HepG2 (cell line): ENCODE measurements at regions of chr12 and their contacts with region 1.

Region 1: GRCh38 chr12:212715-213526 is 1.0 kb downstream of the SLC6A12 start:
- DNase-seq: peak; percentile 47
- ATAC-seq: peak; percentile 5
- H3K4me3 ChIP-seq: peak overlapping the region; percentile 35 to 65 (median 43); a peak in 5 of 6 replicates
- H3K27ac ChIP-seq: no peak overlapping the region
- H3K4me1 ChIP-seq: peaks cover 73% of the 10 kb centered on the region
- H3K27me3 ChIP-seq: peaks cover 0 to 16% of the 10 kb centered on the region in 2 experiments; a peak in 3 of 5 replicates
- CTCF ChIP-seq: no peak
- EP300 ChIP-seq: peak in 1 of 2 experiments; percentile 44; a peak in 1 of 4 replicates
- POLR2A ChIP-seq: no peak
- RAD21 ChIP-seq: no peak

Region 2: GRCh38 chr12:176321-177181 is 36.4 kb before region 1 on chr12:
- CTCF ChIA-PET with region 1: no interaction called
- POLR2A ChIA-PET with region 1: no interaction called
- in situ Hi-C with region 1: no loop called
- intact Hi-C with region 1: loop called (anchors 5 kb)
- DNase-seq: peak; percentile 61
- ATAC-seq: peak; percentile 76
- H3K4me3 ChIP-seq: peak overlapping the region in 1 of 3 experiments; percentile 52; a peak in 2 of 6 replicates
- H3K27ac ChIP-seq: no peak overlapping the region
- H3K4me1 ChIP-seq: peaks cover 52% of the 10 kb centered on the region
- H3K27me3 ChIP-seq: peaks cover 10 to 59% of the 10 kb centered on the region in 2 experiments; a peak in 4 of 5 replicates
- CTCF ChIP-seq: no peak
- EP300 ChIP-seq: no peak
- POLR2A ChIP-seq: no peak
- RAD21 ChIP-seq: no peak

Region 3: DNA sequence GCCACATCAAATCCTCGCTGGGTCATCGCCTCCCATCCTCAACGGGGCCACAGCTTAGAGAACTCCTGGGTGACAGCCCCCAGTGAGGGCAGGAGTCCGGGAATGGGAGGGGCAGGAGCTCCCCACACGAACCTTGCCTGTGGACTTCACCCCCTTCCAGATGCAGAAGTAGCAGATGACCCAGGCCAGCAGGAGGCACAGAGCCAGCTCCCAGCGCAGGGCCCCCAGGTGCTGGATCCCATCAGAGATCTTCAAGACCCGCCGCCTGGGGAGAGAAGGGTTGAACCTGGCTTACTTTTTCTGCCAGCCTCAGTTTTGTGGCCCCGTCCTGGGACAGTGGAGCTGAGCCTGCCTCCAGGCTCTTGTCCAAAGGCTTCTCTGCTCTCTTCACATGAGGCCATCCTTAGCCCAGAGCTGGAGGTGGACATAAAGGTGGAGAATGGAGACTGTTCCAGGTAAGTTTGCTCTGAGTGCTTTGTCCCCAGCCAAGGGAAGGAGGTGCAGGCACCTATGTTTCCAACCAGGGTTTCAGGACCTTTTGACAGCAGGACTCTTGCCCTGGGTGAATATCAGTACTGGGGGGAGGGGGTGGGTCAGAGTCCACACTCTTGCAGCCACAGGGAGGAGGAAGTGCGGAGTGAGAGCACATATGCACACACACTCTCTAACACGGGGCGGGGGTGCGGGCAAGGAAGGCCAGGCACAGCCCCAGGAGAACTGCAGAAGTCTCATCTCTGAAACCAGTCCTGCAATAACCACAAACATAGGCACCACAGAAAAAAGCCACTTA is 24.3 kb after region 1 on chr12:
- CTCF ChIA-PET with region 1: no interaction called
- POLR2A ChIA-PET with region 1: interaction called, 12 read pairs
- in situ Hi-C with region 1: no loop called
- intact Hi-C with region 1: no loop called
- DNase-seq: peak; percentile 66
- ATAC-seq: peak; percentile 90
- H3K4me3 ChIP-seq: peak overlapping the region; percentile 36 to 61 (median 42); a peak in 5 of 6 replicates
- H3K27ac ChIP-seq: peak overlapping the region; percentile 82
- H3K4me1 ChIP-seq: peaks cover 46% of the 10 kb centered on the region
- H3K27me3 ChIP-seq: no peaks in the 10 kb centered on the region; a peak in 1 of 5 replicates
- CTCF ChIP-seq: 0 out of 2 replicates have a peak, but pooled peaks have one; percentile 26
- EP300 ChIP-seq: peak in 1 of 2 experiments; percentile 44; a peak in 2 of 4 replicates
- POLR2A ChIP-seq: 0 out of 4 replicates have a peak, but pooled peaks of 1 of the 2 experiments have one; percentile 24
- RAD21 ChIP-seq: no peak